HAP-1 (cell line): ENCODE measurements at regions of chr3 and their contacts with region 1.

Region 1: GRCh38 chr3:56702490-56703315 is 19.6 kb upstream of the TASOR start:
- DNase-seq: peak; percentile 60 to 64
- H3K4me3 ChIP-seq: no peak overlapping the region
- H3K4me1 ChIP-seq: no peaks in the 10 kb centered on the region
- H3K27me3 ChIP-seq: no peaks in the 10 kb centered on the region

Region 2: DNA sequence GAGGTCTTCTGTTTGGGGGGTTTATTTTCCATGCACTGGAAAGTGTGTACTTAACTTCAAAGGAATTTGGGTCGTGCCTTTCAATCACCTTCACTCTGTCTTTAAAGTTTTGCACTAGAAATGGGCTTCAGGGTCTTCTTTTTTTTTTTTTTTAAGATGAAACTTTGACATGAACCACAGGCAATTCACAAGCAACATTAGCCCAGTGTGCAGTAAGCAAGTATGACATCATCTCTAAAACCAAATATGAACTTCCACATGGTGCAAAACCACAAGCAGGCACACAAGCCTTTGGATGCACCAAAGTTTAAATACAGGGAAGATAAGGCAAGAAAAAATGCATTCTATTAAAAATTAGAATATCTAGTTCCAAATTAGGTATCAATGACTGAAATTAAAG is 616.3 kb before region 1 on chr3:
- in situ Hi-C with region 1: no loop called
- DNase-seq: no peak
- H3K4me3 ChIP-seq: no peak overlapping the region
- H3K4me1 ChIP-seq: no peaks in the 10 kb centered on the region
- H3K27me3 ChIP-seq: no peaks in the 10 kb centered on the region

Region 3: DNA sequence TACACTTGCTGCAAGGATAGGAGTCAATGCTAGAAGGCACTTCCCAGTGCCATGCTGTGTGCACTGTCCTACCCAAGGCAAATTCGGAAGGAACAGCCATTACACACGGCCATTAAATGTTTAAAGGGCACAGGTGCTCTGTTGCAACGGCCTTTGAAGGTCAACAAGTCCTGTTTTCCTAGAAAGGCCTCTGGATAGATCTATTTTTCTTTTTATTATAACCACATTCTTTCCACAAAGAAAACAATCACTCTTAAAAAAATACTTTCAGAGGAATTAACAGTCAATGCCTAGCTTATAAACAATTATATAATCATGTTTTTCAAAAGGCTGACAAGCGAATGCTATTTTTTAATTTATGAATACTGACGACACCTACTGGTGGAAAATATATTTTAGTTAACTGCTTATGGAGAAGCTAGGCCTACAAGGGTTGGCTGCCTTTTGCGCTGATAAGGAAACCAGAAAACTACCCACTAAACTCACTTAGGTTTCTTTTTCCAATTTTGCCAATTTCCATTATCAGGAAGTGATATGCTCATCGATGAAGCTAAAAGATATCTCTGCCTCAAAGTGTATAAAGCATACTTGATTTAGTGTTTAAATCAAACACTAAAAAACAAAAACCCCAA is 96.7 kb after region 1 on chr3:
- in situ Hi-C with region 1: loop called (anchors 10 kb)
- DNase-seq: peak in 1 of 2 experiments; percentile 75
- H3K4me3 ChIP-seq: no peak overlapping the region
- H3K4me1 ChIP-seq: peaks cover 9% of the 10 kb centered on the region
- H3K27me3 ChIP-seq: no peaks in the 10 kb centered on the region

Region 4: DNA sequence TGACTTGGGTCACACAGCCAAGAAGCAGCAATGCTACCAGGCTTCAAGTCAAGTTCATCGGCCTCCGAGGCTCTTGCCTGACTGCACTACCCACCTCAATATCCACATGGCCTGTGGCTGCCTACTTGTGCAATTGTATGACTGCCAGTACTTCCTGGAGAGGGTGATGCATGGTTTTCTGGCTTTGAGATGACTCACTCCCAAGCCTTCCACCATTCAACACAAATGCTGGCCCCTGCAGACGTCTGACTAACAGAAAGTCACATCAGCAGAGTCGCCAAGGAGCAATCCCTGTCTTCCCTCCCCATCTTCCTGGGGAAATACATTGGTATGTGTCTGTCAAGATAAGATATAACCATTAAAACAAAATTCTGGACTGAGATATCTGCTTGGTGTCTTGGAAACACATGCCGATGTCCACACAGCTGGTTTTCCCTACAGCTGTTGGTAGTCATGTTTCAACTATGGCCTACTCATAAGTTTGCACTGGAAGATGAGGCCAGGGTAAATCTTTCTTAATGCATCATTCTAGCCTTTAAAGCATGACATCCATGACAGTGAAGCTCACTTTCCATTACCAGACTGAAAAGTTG is 278.2 kb after region 1 on chr3:
- in situ Hi-C with region 1: loop called (anchors 5 kb)
- DNase-seq: no peak
- H3K4me3 ChIP-seq: no peak overlapping the region
- H3K4me1 ChIP-seq: no peaks in the 10 kb centered on the region
- H3K27me3 ChIP-seq: no peaks in the 10 kb centered on the region